Esophagus muscularis mucosa (tissue), 4 donors: ENCODE measurements at regions of chr14 and their contacts with region 1.

Region 1: DNA sequence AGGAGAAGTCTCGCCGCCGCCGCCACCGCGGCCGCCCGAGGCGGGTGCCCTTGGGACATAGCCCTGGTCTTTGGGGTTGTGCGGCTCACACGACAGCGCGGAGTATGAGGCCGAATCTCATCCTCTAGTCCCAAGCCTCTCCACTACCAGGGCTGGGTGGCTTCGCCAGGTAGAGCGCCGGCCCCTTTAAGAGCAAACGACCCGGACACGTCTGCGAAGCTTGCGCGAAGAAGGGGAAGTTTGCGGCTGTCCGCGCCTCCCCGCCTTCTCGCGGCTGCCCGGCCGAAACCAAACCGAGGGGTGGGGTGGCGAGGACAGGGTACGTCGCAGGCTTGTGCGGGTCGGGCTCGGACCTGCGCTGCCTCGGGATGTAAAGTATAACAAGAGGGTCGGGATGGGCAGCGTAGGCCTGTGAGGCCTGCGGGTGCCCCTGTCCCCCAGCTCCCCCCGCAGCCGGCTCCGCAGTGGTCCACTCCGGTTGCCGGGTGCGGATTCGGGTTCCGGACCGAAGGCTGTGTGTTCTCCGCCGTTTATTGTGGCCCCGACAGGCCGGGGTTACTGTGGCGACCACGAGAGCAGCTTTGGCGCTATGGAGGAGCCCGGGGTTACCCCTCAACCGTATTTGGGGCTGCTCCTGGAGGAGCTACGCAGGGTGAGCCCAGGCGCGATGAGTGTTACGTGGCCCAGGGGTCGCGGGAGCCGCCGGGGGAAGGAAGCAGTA is 33.3 kb downstream of the MIA2 start:
- DNase-seq: peak; percentile 93
- H3K4me3 ChIP-seq: peak overlapping the region; percentile 75 to 92 (median 80)
- H3K27ac ChIP-seq: peak overlapping the region; percentile 95 to 99 (median 96)
- H3K4me1 ChIP-seq: peaks cover 13 to 43% (median 36%) of the 10 kb centered on the region in 4 donors
- H3K27me3 ChIP-seq: no peaks in the 10 kb centered on the region
- CTCF ChIP-seq: no peak
- EP300 ChIP-seq: no peak
- POLR2A ChIP-seq: no peak

Region 2: DNA sequence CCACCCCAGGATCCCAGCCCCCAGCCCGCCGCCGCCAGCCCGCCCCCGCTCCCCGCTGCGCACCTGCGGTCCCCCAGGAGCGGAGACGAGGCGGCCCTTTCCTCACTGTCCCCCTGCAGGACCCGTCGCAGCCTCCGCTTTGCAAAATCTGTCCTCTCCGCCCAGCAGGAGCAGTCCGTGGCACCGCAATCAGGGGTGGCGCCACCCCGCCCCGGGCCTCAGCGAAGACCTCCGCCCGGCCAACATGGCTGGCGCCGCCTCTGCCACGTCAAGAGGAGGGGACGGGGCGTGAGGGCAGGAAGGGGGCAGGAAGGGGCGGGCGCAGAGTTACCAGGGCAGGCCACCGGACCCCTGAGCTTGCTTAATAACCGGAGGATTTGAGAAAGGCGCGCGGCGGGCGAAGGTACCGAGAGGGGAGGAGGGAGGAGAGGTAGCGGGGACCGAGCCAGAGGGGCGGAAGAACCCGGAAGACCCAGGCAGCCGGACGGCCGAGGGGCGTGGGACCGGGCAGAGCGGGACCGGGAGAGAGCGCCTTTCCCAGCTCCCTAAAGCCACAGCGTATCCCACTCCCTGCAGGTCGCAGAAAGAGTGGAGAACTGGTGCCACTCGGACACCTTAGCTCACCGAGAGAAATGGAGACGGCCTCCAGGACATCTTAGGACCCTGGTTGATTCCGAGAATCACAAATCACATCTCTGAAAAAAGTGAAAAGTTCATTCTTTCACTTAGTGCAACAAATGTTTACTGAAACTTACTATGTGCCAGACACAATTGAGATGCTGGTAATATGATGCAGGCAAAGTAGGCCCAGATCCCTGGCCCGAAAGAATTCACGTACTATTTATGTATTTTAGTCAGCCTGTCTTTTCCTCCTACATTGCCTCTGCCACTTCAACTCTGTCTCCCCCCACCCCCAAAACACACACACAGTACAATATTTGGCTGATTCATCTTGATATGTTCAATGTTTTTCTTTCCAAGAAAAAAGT is 163.8 kb before region 1 on chr14 and contains the start of gene SEC23A:
- intact Hi-C with region 1: loop called (anchors 10 kb)
- DNase-seq: peak; percentile 98
- H3K4me3 ChIP-seq: peak within 1 kb of the TSS; percentile 84 to 99 (median 90)
- H3K27ac ChIP-seq: peak within 1 kb of the TSS; percentile 98 to 100 (median 99)
- H3K4me1 ChIP-seq: peaks cover 16 to 61% (median 51%) of the 10 kb centered on the region in 4 donors
- H3K27me3 ChIP-seq: no peaks in the 10 kb centered on the region
- CTCF ChIP-seq: peak in 1 of 3 experiments; percentile 4
- EP300 ChIP-seq: no peak
- POLR2A ChIP-seq: peak; percentile 83
- total RNA-seq, gene SEC23A: 181 to 222 (median 203) TPM

Region 3: GRCh38 chr14:39169541-39169900 is 97.5 kb before region 1 on chr14:
- intact Hi-C with region 1: loop called (anchors 5 kb)
- DNase-seq: no peak
- H3K4me3 ChIP-seq: peak overlapping the region; percentile 85 to 95 (median 92)
- H3K27ac ChIP-seq: peak overlapping the region; percentile 95 to 98 (median 96)
- H3K4me1 ChIP-seq: peaks cover 27 to 58% (median 50%) of the 10 kb centered on the region in 4 donors
- H3K27me3 ChIP-seq: no peaks in the 10 kb centered on the region
- CTCF ChIP-seq: no peak
- EP300 ChIP-seq: no peak
- POLR2A ChIP-seq: no peak

Region 4: GRCh38 chr14:39426605-39427004 is 159.6 kb after region 1 on chr14:
- intact Hi-C with region 1: loop called (anchors 5 kb)
- DNase-seq: no peak
- H3K4me3 ChIP-seq: no peak overlapping the region
- H3K27ac ChIP-seq: no peak overlapping the region
- H3K4me1 ChIP-seq: peaks cover 42 to 69% (median 61%) of the 10 kb centered on the region in 4 donors
- H3K27me3 ChIP-seq: no peaks in the 10 kb centered on the region
- CTCF ChIP-seq: peak in 1 of 3 experiments; percentile 28
- EP300 ChIP-seq: no peak
- POLR2A ChIP-seq: no peak